IMR-90 (cell line): ENCODE measurements at regions of chr20 and their contacts with region 1.

Region 1: GRCh38 chr20:9068851-9069663 is at the start of gene PLCB4:
- DNase-seq: peak; percentile 66
- ATAC-seq: peak; percentile 28
- H3K4me3 ChIP-seq: peak within 1 kb of the TSS; percentile 92
- H3K27ac ChIP-seq: peak within 1 kb of the TSS; percentile 68
- H3K4me1 ChIP-seq: peaks cover 6% of the 10 kb centered on the region
- H3K27me3 ChIP-seq: no peaks in the 10 kb centered on the region
- CTCF ChIP-seq: no peak
- POLR2A ChIP-seq: 0 out of 2 replicates have a peak, but pooled peaks have one; percentile 13
- RAD21 ChIP-seq: no peak
- total RNA-seq, gene PLCB4: 24.0 and 28.3 TPM in 2 replicates

Region 2: GRCh38 chr20:8389381-8390036 is 679.5 kb before region 1 on chr20:
- CTCF ChIA-PET with region 1: no interaction called
- POLR2A ChIA-PET with region 1: no interaction called
- dilution Hi-C with region 1: no loop called
- in situ Hi-C with region 1: no loop called
- intact Hi-C with region 1: no loop called
- DNase-seq: peak; percentile 59
- ATAC-seq: peak; percentile 27; the same call in 1 of the 2 replicates
- H3K4me3 ChIP-seq: no peak overlapping the region
- H3K27ac ChIP-seq: no peak overlapping the region
- H3K4me1 ChIP-seq: peaks cover 7% of the 10 kb centered on the region
- H3K27me3 ChIP-seq: no peaks in the 10 kb centered on the region
- CTCF ChIP-seq: peak; percentile 51
- POLR2A ChIP-seq: no peak
- RAD21 ChIP-seq: peak; percentile 41

Region 3: DNA sequence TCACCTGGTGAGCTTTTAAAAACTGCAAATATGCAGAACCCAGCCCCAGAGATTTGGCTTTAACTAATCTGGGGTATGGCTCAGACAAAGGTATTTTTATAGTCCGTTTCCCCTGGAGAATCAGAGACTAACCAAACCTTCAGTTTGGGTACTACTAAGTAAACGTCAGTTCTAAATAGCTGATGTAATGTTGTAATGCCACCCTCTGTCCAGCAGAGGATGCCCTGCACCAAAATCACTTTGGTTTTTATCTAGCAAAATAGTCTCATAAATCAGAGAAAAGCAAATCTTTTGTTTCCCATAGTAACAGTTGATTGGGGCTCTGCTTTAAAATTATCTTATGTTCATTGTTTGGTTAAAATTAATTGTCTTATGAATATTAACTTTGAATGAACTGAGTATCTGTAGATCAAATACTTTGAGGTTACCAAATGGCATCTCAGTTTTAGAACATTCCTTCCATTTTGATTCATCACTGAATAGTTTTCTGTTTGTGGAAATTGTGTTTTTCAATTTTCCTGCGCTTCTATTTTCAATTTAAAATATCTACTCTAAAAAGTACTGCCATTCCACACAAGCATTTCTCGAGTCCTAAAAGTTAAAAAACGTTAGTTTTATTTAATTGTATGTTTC is 278.5 kb before region 1 on chr20:
- CTCF ChIA-PET with region 1: no interaction called
- POLR2A ChIA-PET with region 1: no interaction called
- dilution Hi-C with region 1: no loop called
- in situ Hi-C with region 1: no loop called
- intact Hi-C with region 1: loop called (anchors 1 kb)
- DNase-seq: peak; percentile 60
- ATAC-seq: peak; percentile 90
- H3K4me3 ChIP-seq: no peak overlapping the region
- H3K27ac ChIP-seq: no peak overlapping the region
- H3K4me1 ChIP-seq: no peaks in the 10 kb centered on the region
- H3K27me3 ChIP-seq: no peaks in the 10 kb centered on the region
- CTCF ChIP-seq: peak; percentile 95
- POLR2A ChIP-seq: no peak
- RAD21 ChIP-seq: peak; percentile 90

Region 4: DNA sequence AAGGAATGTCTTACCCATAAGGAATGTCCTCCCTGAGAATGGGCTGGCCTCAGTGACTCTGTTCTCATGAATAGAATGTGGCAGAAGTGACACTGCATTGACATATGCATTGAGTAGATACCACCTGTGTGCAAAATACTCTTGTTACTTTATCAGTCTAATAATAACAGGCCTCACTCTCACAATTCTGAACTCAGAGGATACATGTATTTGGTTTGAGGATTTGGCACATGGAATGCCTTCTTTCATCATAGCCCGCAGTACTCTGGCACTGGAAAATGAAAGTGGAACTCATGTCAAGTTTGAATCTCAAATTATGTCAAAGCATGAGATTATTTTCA is 53.1 kb before region 1 on chr20:
- CTCF ChIA-PET with region 1: no interaction called
- POLR2A ChIA-PET with region 1: interaction called, 14 read pairs
- dilution Hi-C with region 1: no loop called
- in situ Hi-C with region 1: no loop called
- intact Hi-C with region 1: loop called (anchors 5 kb)
- DNase-seq: peak; percentile 58
- ATAC-seq: peak; percentile 72
- H3K4me3 ChIP-seq: no peak overlapping the region
- H3K27ac ChIP-seq: peak overlapping the region; percentile 57
- H3K4me1 ChIP-seq: peaks cover 5% of the 10 kb centered on the region; the same call in 1 of the 2 replicates
- H3K27me3 ChIP-seq: no peaks in the 10 kb centered on the region
- CTCF ChIP-seq: no peak
- POLR2A ChIP-seq: no peak
- RAD21 ChIP-seq: no peak

Region 5: DNA sequence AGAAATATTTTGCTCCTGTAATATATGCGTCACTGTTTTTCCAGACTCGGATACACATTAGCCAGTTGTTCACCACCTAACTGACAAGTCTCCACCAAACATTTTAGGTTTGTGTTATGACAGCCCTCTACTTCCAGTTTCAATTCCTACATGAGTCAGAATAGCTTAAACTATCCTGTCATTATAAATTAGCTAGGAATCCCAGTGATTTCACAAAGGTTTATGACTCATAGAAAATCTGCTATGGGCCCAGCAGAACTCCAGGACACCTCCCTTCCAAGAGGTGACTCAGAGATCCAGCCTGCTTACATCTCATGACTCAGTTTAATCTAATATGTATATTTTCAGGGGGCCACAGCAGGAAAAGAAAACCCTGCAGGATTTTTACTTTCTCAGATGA is 17.5 kb before region 1 on chr20:
- CTCF ChIA-PET with region 1: no interaction called
- POLR2A ChIA-PET with region 1: interaction called, 3 read pairs
- dilution Hi-C with region 1: no loop called
- in situ Hi-C with region 1: no loop called
- intact Hi-C with region 1: loop called (anchors 1 kb)
- DNase-seq: peak; percentile 99
- ATAC-seq: peak; percentile 91
- H3K4me3 ChIP-seq: no peak overlapping the region
- H3K27ac ChIP-seq: no peak overlapping the region
- H3K4me1 ChIP-seq: peaks cover 25% of the 10 kb centered on the region
- H3K27me3 ChIP-seq: no peaks in the 10 kb centered on the region
- CTCF ChIP-seq: no peak
- POLR2A ChIP-seq: no peak
- RAD21 ChIP-seq: no peak

Region 6: DNA sequence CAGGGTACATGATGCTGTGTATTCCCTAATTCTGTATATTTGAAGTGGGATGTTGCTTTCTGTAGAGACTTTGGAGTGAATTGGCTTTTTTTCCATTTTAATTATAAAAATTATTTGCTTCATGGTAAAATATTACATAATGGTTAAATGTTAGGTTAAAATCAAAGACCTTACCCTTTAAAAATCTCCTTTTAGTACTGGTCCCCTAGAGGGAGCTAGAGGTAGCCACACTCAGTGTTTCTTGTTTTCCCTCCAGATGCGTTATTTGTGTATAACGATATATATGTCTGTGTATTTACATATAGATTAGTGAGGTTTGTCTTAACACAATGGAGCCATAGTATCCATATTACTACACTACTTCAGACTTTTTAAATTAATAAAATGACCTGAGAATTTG is 146.5 kb after region 1 on chr20:
- CTCF ChIA-PET with region 1: no interaction called
- POLR2A ChIA-PET with region 1: no interaction called
- dilution Hi-C with region 1: no loop called
- in situ Hi-C with region 1: no loop called
- intact Hi-C with region 1: loop called (anchors 5 kb)
- DNase-seq: no peak
- ATAC-seq: no peak
- H3K4me3 ChIP-seq: no peak overlapping the region
- H3K27ac ChIP-seq: no peak overlapping the region
- H3K4me1 ChIP-seq: peaks cover 8% of the 10 kb centered on the region
- H3K27me3 ChIP-seq: no peaks in the 10 kb centered on the region
- CTCF ChIP-seq: peak; percentile 34
- POLR2A ChIP-seq: no peak
- RAD21 ChIP-seq: no peak

Region 7: DNA sequence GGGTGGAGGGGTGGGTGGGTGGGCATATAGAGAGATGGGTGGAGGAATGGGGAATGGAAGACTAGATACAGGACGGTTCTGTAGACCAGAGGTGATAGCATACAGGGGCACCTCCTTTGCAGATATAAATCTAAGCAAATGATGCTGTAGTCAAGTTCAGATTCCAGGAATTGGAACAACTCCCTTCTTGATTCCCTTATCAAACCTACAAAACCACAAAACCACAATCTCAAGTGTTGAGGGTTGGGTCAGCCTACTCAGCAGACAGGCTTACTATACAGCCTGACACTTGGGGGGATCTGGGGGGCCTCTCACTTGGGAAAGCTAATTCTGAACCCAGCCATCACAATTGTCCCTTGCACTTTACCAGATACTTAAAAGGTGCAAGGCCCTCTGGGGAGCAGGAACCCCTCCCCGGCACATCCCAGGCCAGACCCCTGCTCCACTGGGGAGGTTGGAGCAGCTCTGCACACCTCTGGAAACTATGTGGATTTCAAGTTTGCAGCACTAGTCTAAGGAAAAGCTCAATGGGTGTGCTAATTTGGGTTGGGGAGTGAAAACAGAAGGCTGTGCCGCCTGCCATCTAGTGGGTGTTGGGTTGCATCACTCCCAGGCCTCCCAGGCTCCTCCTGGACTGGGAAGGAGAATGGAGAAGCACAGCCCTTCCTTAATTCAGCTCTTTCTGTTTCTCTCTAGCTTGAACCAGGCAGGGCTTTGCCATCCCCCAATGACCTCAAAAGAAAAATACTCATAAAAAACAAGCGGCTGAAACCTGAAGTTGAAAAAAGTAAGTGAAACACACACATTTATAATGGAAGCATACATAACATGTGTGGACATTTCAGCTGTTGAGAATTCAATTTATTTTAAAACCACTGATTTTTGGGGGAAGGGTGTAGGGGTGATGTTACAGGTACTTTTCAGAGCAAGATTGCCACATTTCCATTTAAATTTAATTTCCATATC is 324.1 kb after region 1 on chr20:
- CTCF ChIA-PET with region 1: interaction called, 5 read pairs
- POLR2A ChIA-PET with region 1: no interaction called
- dilution Hi-C with region 1: no loop called
- in situ Hi-C with region 1: no loop called
- intact Hi-C with region 1: loop called (anchors 1 kb)
- DNase-seq: peak; percentile 73
- ATAC-seq: peak; percentile 93
- H3K4me3 ChIP-seq: no peak overlapping the region
- H3K27ac ChIP-seq: no peak overlapping the region
- H3K4me1 ChIP-seq: peaks cover 14% of the 10 kb centered on the region
- H3K27me3 ChIP-seq: no peaks in the 10 kb centered on the region
- CTCF ChIP-seq: peak; percentile 92
- POLR2A ChIP-seq: no peak
- RAD21 ChIP-seq: peak; percentile 92

Region 8: DNA sequence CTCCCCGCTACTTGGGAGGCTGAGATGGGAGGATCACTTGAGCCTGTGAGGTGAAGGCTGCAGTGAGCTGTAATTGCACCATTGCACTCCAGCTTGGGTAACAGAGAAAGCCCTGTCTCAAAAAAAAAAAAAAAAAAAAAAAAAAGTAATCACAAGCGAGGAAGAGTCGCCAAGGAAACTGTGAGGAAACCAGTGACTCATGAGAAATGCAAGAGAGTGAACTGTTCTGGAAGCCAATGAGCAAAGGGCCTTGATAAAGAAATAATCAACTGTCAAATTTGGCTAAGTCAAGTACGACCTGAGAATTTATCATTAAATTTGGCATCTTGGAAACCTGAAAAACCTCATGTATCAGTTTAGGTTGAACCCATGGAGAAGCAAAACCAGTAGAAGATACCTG is 429.3 kb after region 1 on chr20:
- CTCF ChIA-PET with region 1: no interaction called
- POLR2A ChIA-PET with region 1: no interaction called
- dilution Hi-C with region 1: no loop called
- in situ Hi-C with region 1: no loop called
- intact Hi-C with region 1: no loop called
- DNase-seq: peak; percentile 44
- ATAC-seq: no peak
- H3K4me3 ChIP-seq: no peak overlapping the region
- H3K27ac ChIP-seq: no peak overlapping the region
- H3K4me1 ChIP-seq: no peaks in the 10 kb centered on the region
- H3K27me3 ChIP-seq: peaks cover 8% of the 10 kb centered on the region
- CTCF ChIP-seq: no peak
- POLR2A ChIP-seq: no peak
- RAD21 ChIP-seq: no peak

Region 9: GRCh38 chr20:9565910-9566550 is 497.0 kb after region 1 on chr20:
- CTCF ChIA-PET with region 1: no interaction called
- POLR2A ChIA-PET with region 1: no interaction called
- dilution Hi-C with region 1: no loop called
- in situ Hi-C with region 1: no loop called
- intact Hi-C with region 1: no loop called
- DNase-seq: no peak
- ATAC-seq: no peak
- H3K4me3 ChIP-seq: no peak overlapping the region
- H3K27ac ChIP-seq: no peak overlapping the region
- H3K4me1 ChIP-seq: no peaks in the 10 kb centered on the region
- H3K27me3 ChIP-seq: peaks cover 21% of the 10 kb centered on the region
- CTCF ChIP-seq: no peak
- POLR2A ChIP-seq: no peak
- RAD21 ChIP-seq: no peak